GM13976 (cell line): ENCODE measurements at regions of chr15 and their contacts with region 1.

Region 1: GRCh38 chr15:79896637-79897379 is at the start of gene MTHFS:
- DNase-seq: peak; percentile 87
- CTCF ChIP-seq: peak; percentile 33

Region 2: DNA sequence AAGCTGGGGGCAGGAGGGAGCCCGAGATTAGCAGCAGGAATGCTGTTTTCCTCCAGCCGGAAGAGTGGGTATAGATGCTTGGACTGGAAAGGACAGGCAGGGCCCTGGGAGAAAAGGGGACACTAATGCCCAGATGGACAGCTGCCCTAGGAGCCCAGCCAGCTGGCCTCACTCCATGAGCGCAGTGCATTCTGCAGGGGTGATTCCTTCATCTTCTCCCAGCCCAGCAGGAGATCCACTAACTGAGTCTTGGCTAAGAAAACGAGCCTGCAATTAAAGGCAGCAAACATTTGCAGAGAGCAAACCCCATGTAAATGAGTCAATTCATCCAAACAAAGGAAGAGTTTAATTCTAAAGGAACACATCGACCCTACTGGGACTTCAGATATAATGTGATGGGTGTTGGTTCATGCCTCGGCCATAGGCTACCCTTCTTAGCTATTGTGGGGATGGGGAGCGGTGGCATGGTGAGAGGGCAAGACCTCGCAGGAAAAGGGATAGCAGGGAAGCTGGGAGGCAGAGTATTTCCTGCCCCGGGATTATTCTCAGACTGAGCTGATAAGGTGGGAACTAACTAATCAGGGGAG is 478.0 kb before region 1 on chr15:
- in situ Hi-C with region 1: no loop called
- DNase-seq: no peak
- CTCF ChIP-seq: no peak

Region 3: DNA sequence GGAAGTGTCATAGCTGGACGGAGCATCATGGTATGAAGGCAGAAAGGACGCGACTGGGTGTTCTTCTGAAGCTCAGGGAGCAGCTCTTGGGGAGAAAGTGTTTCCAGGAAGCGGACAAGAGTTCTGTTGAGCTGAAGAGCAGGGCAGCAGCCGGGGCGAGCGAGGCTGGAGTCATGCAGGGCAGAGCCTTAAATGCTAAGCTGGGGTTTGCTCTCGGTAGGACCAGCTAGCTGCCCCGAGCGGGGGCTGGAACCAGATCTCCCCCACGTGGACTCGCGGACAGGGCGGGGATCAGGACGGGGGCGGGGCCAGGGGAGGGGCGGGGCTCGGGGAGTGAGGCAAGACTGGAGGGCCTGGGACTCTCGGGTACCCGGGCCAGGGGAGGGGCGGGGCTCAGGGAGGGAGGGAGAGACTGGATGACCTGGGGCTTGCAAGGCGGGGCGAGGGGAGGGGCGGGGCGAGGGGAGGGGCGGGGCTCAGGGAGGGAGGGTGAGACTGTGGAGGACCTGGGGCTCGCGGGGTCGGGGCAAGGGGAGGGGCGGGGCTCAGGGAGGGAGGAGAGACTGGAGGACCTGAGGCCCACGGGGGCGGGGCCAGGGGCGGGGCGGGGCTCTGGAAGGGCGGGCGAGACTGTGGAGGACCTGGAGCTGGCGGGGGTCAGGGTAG is 255.5 kb after region 1 on chr15:
- in situ Hi-C with region 1: loop called (anchors 25 kb)
- DNase-seq: peak; percentile 99
- CTCF ChIP-seq: no peak

Region 4: GRCh38 chr15:80301472-80301871 is 404.7 kb after region 1 on chr15:
- in situ Hi-C with region 1: no loop called
- DNase-seq: no peak
- CTCF ChIP-seq: no peak